ENCODE measurements at regions of chr2 and their contacts with region 1.

Region 1: GRCh38 chr2:95050427-95050861 is 24.9 kb downstream of the MAL start:
- DNase-seq: no peak
- H3K4me3 Mint-ChIP-seq: peak overlapping the region; percentile 59
- H3K27ac Mint-ChIP-seq: peak overlapping the region; percentile 97
- H3K4me1 Mint-ChIP-seq: peaks cover 84% of the 10 kb centered on the region
- H3K27me3 Mint-ChIP-seq: no peaks in the 10 kb centered on the region

Region 2: DNA sequence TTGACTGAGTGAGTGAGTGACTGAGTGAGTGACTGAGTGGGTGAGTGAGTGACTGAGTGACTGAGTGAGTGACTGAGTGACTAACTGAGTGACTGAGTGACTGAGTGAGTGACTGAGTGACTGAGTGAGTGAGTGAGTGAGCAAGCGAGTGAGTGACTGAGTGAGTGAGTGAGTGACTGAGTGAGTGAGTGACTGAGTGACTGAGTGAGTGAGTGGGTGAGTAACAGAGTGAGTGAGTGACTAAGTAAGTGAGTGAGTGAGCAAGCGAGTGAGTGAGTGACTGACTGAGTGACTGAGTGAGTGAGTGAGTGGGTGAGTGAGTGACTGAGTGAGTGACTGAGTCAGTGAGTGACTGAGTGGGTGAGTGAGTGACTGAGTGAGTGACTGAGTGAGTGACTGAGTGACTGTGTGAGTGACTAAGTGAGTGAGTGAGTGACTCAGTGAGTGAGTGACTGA is 13.0 kb before region 1 on chr2:
- intact Hi-C with region 1: loop called (anchors 2 kb)
- DNase-seq: no peak
- H3K4me3 Mint-ChIP-seq: no peak overlapping the region
- H3K27ac Mint-ChIP-seq: peak overlapping the region; percentile 95
- H3K4me1 Mint-ChIP-seq: peaks cover 60% of the 10 kb centered on the region
- H3K27me3 Mint-ChIP-seq: no peaks in the 10 kb centered on the region

Region 3: DNA sequence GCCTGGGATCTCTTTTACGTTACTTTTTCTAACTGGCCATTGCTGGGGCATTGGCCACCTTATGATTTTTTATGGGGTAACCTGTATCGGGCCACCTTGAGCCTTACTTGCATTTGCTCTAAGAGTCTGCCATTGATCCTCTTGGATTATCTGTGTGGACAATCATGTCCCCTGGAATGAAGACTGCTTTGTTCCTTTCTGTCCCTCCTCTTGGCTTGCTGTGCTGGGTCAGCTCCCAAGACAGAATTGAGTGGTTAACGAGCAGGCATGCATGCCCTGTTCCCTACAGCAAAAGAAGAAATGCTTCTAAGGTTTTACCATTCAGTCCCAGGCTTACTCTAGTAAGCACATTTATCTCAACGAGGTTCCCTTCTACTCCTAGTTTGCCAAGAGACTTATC is 21.4 kb after region 1 on chr2:
- intact Hi-C with region 1: loop called (anchors 1 kb)
- DNase-seq: no peak
- H3K4me3 Mint-ChIP-seq: no peak overlapping the region
- H3K27ac Mint-ChIP-seq: peak overlapping the region; percentile 34
- H3K4me1 Mint-ChIP-seq: peaks cover 56% of the 10 kb centered on the region
- H3K27me3 Mint-ChIP-seq: no peaks in the 10 kb centered on the region

Region 4: DNA sequence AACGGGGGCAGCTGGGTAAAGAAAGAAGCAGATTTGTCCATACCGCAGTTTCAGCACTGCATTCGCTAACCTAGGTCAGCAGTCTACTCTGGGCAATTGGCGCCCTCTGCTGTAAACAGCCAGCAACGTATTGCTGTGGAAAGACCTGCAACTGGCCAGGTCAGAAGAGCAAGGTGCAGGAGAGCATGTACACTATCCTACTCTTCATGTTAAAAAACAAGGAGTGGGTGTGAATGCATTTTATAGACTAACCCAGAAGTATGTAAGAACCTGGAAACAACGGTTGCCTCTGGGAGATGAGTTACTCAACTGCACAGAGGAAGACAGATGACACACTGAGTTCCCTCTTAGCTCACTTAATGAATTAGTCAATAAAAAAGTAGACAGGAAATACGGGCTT is 65.0 kb after region 1 on chr2:
- intact Hi-C with region 1: no loop called
- DNase-seq: peak; percentile 69
- H3K4me3 Mint-ChIP-seq: no peak overlapping the region
- H3K27ac Mint-ChIP-seq: no peak overlapping the region
- H3K4me1 Mint-ChIP-seq: peaks cover 47% of the 10 kb centered on the region
- H3K27me3 Mint-ChIP-seq: no peaks in the 10 kb centered on the region

Region 5: GRCh38 chr2:95143838-95144237 is 93.4 kb after region 1 on chr2:
- intact Hi-C with region 1: no loop called
- DNase-seq: no peak
- H3K4me3 Mint-ChIP-seq: no peak overlapping the region
- H3K27ac Mint-ChIP-seq: no peak overlapping the region
- H3K4me1 Mint-ChIP-seq: no peaks in the 10 kb centered on the region
- H3K27me3 Mint-ChIP-seq: no peaks in the 10 kb centered on the region

Region 6: DNA sequence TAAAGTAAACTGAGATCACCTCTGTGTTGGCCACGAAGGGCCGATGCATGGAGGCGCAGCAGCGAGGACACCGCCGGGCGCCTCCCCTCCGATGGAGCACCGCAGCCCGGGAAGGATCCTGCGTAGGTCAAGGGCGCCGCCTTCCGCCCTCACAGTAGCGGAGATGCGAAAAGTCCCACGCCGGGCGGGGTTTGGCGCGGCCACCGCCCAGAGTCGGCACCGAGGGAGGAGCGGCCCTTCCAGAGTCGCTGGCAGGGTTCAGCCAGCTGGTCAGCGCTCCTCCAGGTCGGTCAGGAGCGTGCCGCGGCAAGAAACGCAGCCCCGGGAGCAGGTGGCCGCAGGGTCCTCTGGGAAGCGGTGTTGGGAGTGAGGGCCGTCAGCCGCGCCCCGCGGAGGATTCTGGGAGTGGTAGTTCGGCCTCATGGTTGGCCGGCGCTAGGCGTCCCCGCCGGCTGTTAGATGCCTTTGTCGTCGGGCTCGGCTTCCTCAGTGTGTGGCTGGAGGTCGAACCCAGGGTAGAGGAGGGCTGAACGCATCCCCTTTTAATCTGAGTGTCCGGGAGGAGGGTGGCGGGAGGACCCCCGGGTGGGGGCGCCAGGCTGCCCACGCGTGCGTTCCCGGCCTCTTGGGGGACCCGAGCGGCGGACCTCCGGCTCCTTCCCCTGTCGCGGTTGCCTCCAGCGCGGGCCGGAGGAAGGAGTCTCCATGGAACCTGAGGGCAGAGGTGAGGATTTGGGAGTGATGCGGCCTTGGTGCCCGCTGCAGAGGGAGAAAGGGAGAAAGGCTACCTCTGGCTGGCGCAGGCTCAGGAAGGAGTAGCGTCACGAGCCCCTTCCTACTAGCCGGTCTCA is 156.9 kb after region 1 on chr2 and contains the start of gene ZNF892:
- intact Hi-C with region 1: no loop called
- DNase-seq: peak; percentile 74
- H3K4me3 Mint-ChIP-seq: peak within 1 kb of the TSS; percentile 90
- H3K27ac Mint-ChIP-seq: peak within 1 kb of the TSS; percentile 54
- H3K4me1 Mint-ChIP-seq: peaks cover 30% of the 10 kb centered on the region
- H3K27me3 Mint-ChIP-seq: no peaks in the 10 kb centered on the region
- total RNA-seq, gene ZNF892: 4.7 and 5.9 TPM in 2 replicates